ENCODE measurements at regions of chr9 and their contacts with region 1.

Region 1: DNA sequence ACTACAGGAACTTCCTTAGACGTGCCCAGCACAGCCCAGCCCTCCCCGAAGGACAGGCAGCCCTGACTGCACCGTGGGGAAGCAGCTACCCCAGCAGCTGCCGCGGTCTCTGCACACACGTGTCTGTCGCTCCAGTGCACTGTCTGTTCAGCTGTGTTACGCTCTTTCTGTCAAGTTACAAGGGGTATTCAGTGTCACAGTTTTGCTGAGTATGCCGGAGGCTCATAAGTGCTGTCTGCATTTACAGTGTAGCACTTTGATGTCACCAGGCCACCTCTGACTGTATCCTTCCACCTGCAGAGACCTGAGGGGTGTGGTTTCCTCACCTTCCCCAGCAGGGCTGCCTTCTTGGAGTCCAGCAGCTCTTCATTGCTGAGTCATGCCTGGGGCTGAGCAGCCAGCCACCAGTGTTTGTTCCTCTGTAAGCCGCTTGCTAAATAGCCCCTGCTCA is 126.8 kb downstream of the EHMT1 start:
- DNase-seq: peak; percentile 89
- ATAC-seq: peak; percentile 96
- H3K4me3 ChIP-seq: no peak overlapping the region
- H3K4me3 Mint-ChIP-seq: peak overlapping the region; percentile 76
- H3K27ac ChIP-seq: peak overlapping the region; percentile 62 to 71
- H3K27ac Mint-ChIP-seq: peak overlapping the region; percentile 97
- H3K4me1 ChIP-seq: peaks cover 21 to 26% of the 10 kb centered on the region in 2 donors
- H3K4me1 Mint-ChIP-seq: peaks cover 57% of the 10 kb centered on the region
- H3K27me3 ChIP-seq: no peaks in the 10 kb centered on the region
- H3K27me3 Mint-ChIP-seq: no peaks in the 10 kb centered on the region
- CTCF ChIP-seq: no peak

Region 2: GRCh38 chr9:137682431-137682991 is 63.1 kb before region 1 on chr9:
- CTCF ChIA-PET with region 1: no interaction called
- POLR2A ChIA-PET with region 1: interaction called, 6 read pairs
- intact Hi-C with region 1: loop called (anchors 2 kb)
- DNase-seq: no peak
- ATAC-seq: peak; percentile 73
- H3K4me3 ChIP-seq: no peak overlapping the region
- H3K4me3 Mint-ChIP-seq: peak overlapping the region; percentile 19
- H3K27ac ChIP-seq: peak overlapping the region; percentile 25 to 90
- H3K27ac Mint-ChIP-seq: peak overlapping the region; percentile 81
- H3K4me1 ChIP-seq: peaks cover 43 to 49% of the 10 kb centered on the region in 2 donors
- H3K4me1 Mint-ChIP-seq: peaks cover 73% of the 10 kb centered on the region
- H3K27me3 ChIP-seq: no peaks in the 10 kb centered on the region
- H3K27me3 Mint-ChIP-seq: no peaks in the 10 kb centered on the region
- CTCF ChIP-seq: no peak

Region 3: GRCh38 chr9:137705443-137706293 is 39.9 kb before region 1 on chr9:
- CTCF ChIA-PET with region 1: no interaction called
- POLR2A ChIA-PET with region 1: no interaction called
- intact Hi-C with region 1: loop called (anchors 5 kb)
- DNase-seq: peak; percentile 73
- ATAC-seq: peak; percentile 83
- H3K4me3 ChIP-seq: peak overlapping the region in 3 of 5 experiments; percentile 1 to 36 (median 25)
- H3K4me3 Mint-ChIP-seq: peak overlapping the region; percentile 83
- H3K27ac ChIP-seq: peak overlapping the region; percentile 41 to 65
- H3K27ac Mint-ChIP-seq: peak overlapping the region; percentile 97
- H3K4me1 ChIP-seq: peaks cover 38 to 52% of the 10 kb centered on the region in 2 donors
- H3K4me1 Mint-ChIP-seq: peaks cover 65% of the 10 kb centered on the region
- H3K27me3 ChIP-seq: no peaks in the 10 kb centered on the region
- H3K27me3 Mint-ChIP-seq: no peaks in the 10 kb centered on the region
- CTCF ChIP-seq: no peak

Region 4: GRCh38 chr9:137757613-137758029 is 12.1 kb after region 1 on chr9:
- CTCF ChIA-PET with region 1: interaction called, 6 read pairs
- POLR2A ChIA-PET with region 1: interaction called, 14 read pairs
- intact Hi-C with region 1: loop called (anchors 1 kb)
- DNase-seq: peak; percentile 76
- ATAC-seq: peak; percentile 18
- H3K4me3 ChIP-seq: peak overlapping the region in 2 of 5 experiments; percentile 13 to 23
- H3K4me3 Mint-ChIP-seq: peak overlapping the region; percentile 78
- H3K27ac ChIP-seq: peak overlapping the region; percentile 88
- H3K27ac Mint-ChIP-seq: peak overlapping the region; percentile 99
- H3K4me1 ChIP-seq: peaks cover 60% of the 10 kb centered on the region in 2 donors
- H3K4me1 Mint-ChIP-seq: peaks cover 63% of the 10 kb centered on the region
- H3K27me3 ChIP-seq: no peaks in the 10 kb centered on the region
- H3K27me3 Mint-ChIP-seq: no peaks in the 10 kb centered on the region
- CTCF ChIP-seq: no peak

Region 5: DNA sequence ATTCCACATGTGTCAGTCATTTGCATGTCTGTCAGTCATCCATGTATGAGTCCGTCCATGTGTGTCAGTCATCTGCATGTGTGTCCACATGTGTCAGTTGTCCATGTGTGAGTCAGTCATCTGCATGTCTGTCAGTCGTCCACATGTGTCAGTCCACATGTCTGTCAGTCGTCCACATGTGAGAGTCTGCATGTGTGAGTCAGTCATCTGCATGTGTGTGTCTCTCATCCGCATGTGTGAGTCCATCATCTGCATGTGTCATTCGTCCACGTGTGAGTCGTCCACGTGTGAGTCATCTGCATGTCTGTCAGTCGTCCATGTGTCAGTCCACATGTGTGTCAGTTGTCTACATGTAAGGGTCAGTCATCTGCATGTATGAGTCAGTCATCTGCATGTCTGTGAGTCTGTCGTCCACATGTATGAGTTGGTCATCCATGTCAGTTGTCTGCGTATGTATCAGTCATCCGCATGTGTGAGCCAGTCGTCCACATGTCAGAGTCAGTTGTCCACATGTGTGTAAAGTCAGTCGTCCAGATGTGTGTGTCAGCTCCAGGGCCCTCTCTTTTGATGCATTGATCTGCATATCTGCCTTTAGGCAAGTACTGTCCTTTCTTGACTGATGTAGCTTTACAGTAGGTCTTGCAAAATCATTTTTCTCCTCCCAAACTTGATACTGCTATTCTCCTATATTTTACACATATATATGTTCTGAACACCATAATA is 59.5 kb after region 1 on chr9:
- CTCF ChIA-PET with region 1: no interaction called
- POLR2A ChIA-PET with region 1: no interaction called
- intact Hi-C with region 1: loop called (anchors 5 kb)
- DNase-seq: no peak
- ATAC-seq: no peak
- H3K4me3 ChIP-seq: no peak overlapping the region
- H3K4me3 Mint-ChIP-seq: no peak overlapping the region
- H3K27ac ChIP-seq: no peak overlapping the region
- H3K27ac Mint-ChIP-seq: peak overlapping the region; percentile 20
- H3K4me1 ChIP-seq: peaks cover 0 to 10% of the 10 kb centered on the region in 2 donors
- H3K4me1 Mint-ChIP-seq: peaks cover 18% of the 10 kb centered on the region
- H3K27me3 ChIP-seq: no peaks in the 10 kb centered on the region
- H3K27me3 Mint-ChIP-seq: no peaks in the 10 kb centered on the region
- CTCF ChIP-seq: no peak

Region 6: GRCh38 chr9:137828527-137829259 is 83.1 kb after region 1 on chr9:
- CTCF ChIA-PET with region 1: no interaction called
- POLR2A ChIA-PET with region 1: no interaction called
- intact Hi-C with region 1: loop called (anchors 5 kb)
- DNase-seq: peak; percentile 10
- ATAC-seq: no peak
- H3K4me3 ChIP-seq: no peak overlapping the region
- H3K4me3 Mint-ChIP-seq: no peak overlapping the region
- H3K27ac ChIP-seq: no peak overlapping the region
- H3K27ac Mint-ChIP-seq: peak overlapping the region; percentile 26
- H3K4me1 ChIP-seq: peaks cover 6 to 9% of the 10 kb centered on the region in 2 donors
- H3K4me1 Mint-ChIP-seq: peaks cover 18% of the 10 kb centered on the region
- H3K27me3 ChIP-seq: no peaks in the 10 kb centered on the region
- H3K27me3 Mint-ChIP-seq: no peaks in the 10 kb centered on the region
- CTCF ChIP-seq: no peak

Measured in B cell (primary cell).